GM10248 (cell line): ENCODE measurements at regions of chr1 and their contacts with region 1.

Region 1: GRCh38 chr1:39297551-39297950 is 93.1 kb downstream of the MACF1 start:
- DNase-seq: no peak
- CTCF ChIP-seq: no peak

Region 2: DNA sequence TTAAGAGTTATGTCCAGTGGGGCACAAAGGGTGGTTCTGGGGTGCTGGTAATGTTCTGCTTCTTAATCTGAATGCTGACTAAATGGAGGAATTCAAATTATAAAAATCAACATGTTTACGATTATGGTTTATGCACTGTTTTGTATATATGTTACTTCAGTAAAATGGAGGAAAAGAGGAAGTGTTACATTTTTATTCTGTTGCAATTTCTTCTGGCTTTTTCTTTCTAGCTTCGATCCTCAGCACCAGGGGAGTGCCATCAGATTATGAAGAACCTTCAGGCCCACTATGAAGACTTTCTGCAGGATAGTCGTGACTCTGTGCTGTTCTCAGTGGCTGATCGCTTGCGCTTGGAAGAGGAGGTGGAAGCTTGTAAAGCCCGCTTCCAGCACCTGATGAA is 12.5 kb after region 1 on chr1:
- CTCF ChIA-PET with region 1: interaction called, 12 read pairs
- POLR2A ChIA-PET with region 1: no interaction called
- DNase-seq: no peak
- CTCF ChIP-seq: no peak